Calu3 (cell line): ENCODE measurements at regions of chr9 and their contacts with region 1.

Region 1: GRCh38 chr9:77166193-77166592 is 11.1 kb upstream of the VPS13A start:
- DNase-seq: no peak
- H3K4me3 Mint-ChIP-seq: no peak overlapping the region
- H3K27ac Mint-ChIP-seq: no peak overlapping the region
- H3K4me1 Mint-ChIP-seq: peaks cover 8% of the 10 kb centered on the region
- H3K27me3 Mint-ChIP-seq: no peaks in the 10 kb centered on the region
- CTCF ChIP-seq: no peak

Region 2: GRCh38 chr9:77099388-77099787 is 66.8 kb before region 1 on chr9:
- CTCF ChIA-PET with region 1: no interaction called
- intact Hi-C with region 1: no loop called
- DNase-seq: no peak
- H3K4me3 Mint-ChIP-seq: no peak overlapping the region
- H3K27ac Mint-ChIP-seq: no peak overlapping the region
- H3K4me1 Mint-ChIP-seq: no peaks in the 10 kb centered on the region
- H3K27me3 Mint-ChIP-seq: no peaks in the 10 kb centered on the region
- CTCF ChIP-seq: no peak

Region 3: DNA sequence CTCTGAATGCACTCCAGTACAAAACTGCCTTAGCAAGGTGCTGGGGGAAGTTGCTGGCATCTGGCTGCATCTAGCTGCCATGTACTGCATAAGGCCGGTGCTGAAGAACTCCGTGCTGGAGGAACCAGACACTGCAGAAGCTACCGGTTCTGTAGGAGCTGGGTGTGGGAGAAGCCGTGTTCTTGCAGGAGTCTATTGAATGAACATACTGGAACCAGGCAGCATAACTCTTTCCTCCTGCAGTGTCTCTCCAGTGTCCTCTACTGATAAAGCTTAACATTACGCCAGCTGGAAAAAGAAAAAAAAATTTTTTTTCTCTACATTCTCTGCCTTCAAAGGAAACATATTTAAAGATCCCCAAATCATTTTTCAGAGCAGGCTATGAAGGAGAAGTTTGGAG is 49.7 kb after region 1 on chr9:
- CTCF ChIA-PET with region 1: no interaction called
- intact Hi-C with region 1: loop called (anchors 2 kb)
- DNase-seq: no peak
- H3K4me3 Mint-ChIP-seq: no peak overlapping the region
- H3K27ac Mint-ChIP-seq: no peak overlapping the region
- H3K4me1 Mint-ChIP-seq: no peaks in the 10 kb centered on the region
- H3K27me3 Mint-ChIP-seq: no peaks in the 10 kb centered on the region
- CTCF ChIP-seq: no peak